ENCODE measurements at regions of chr19 and their contacts with region 1.

Region 1: GRCh38 chr19:39397360-39398296 is 6.5 kb downstream of the MED29 start:
- DNase-seq: peak in 1 of 2 experiments; percentile 95
- H3K4me3 ChIP-seq: no peak overlapping the region
- H3K27ac ChIP-seq: no peak overlapping the region
- H3K4me1 ChIP-seq: peaks cover 6 to 21% (median 13%) of the 10 kb centered on the region in 4 experiments
- H3K27me3 ChIP-seq: no peaks in the 10 kb centered on the region
- CTCF ChIP-seq: peak; percentile 92 to 98 (median 98)
- EP300 ChIP-seq: no peak
- POLR2A ChIP-seq: no peak; a peak in 1 of 3 replicates
- RAD21 ChIP-seq: peak; percentile 92 to 96

Region 2: DNA sequence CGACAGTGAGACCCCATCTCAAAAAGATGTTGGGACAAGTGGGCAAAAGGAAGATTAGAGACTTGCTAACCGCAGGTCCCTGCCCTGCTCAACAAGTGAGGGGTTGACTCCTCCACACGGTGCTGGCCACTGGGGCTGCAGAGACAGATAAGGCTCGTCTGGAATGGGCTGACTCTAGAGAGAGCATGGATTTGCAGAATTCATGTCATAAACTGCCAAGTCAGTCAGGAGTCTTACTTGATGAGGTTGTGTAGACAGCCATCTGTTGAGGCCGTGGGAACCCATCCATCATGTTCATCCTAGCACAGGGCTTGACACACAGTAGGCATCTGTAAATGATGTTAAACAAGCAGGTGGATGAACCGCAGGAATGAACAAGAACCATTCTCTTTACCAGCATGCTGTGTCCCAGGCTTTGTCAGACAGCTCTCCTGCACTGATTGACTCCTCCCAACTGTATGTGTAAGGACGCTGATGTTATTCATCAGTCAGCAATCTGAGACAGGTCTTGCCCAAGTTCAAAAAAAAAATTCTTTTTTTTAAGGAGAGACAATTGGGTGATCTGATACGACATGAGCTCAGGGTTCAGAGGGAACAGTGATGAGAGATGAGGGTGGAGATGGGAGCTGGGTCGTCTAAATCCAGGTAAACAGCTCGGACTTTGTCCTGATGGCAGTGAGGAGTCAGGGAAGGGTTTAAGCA is 15.6 kb before region 1 on chr19:
- CTCF ChIA-PET with region 1: interaction called, 10 read pairs
- POLR2A ChIA-PET with region 1: interaction called, 4 read pairs
- DNase-seq: no peak
- H3K4me3 ChIP-seq: no peak overlapping the region
- H3K27ac ChIP-seq: no peak overlapping the region
- H3K4me1 ChIP-seq: peaks cover 0 to 6% (median 0%) of the 10 kb centered on the region in 4 experiments; a peak in 2 of 7 replicates
- H3K27me3 ChIP-seq: no peaks in the 10 kb centered on the region
- CTCF ChIP-seq: no peak
- EP300 ChIP-seq: no peak
- POLR2A ChIP-seq: no peak
- RAD21 ChIP-seq: no peak

Region 3: GRCh38 chr19:39539519-39540332 is 142.1 kb after region 1 on chr19 and contains the start of gene EID2:
- CTCF ChIA-PET with region 1: no interaction called
- POLR2A ChIA-PET with region 1: no interaction called
- DNase-seq: peak in 1 of 2 experiments; percentile 96
- H3K4me3 ChIP-seq: peak within 1 kb of the TSS; percentile 70 to 94 (median 92)
- H3K27ac ChIP-seq: peak within 1 kb of the TSS; percentile 84
- H3K4me1 ChIP-seq: peaks cover 0 to 4% (median under 1%) of the 10 kb centered on the region in 4 experiments; a peak in 3 of 7 replicates
- H3K27me3 ChIP-seq: no peaks in the 10 kb centered on the region
- CTCF ChIP-seq: peak; percentile 66 to 85 (median 74)
- EP300 ChIP-seq: no peak
- POLR2A ChIP-seq: peak in 1 of 2 experiments; percentile 83; a peak in 2 of 3 replicates
- RAD21 ChIP-seq: peak; percentile 46 to 54
- total RNA-seq, gene EID2: 29.6 and 29.9 TPM in 2 replicates

Measured in H1 (cell line).